Calu3 (cell line): ENCODE measurements at regions of chr2 and their contacts with region 1.

Region 1: GRCh38 chr2:191927319-191927867 is 80.5 kb upstream of the CAVIN2 start:
- DNase-seq: peak; percentile 85
- H3K4me3 Mint-ChIP-seq: peak overlapping the region; percentile 56
- H3K27ac Mint-ChIP-seq: peak overlapping the region; percentile 60
- H3K4me1 Mint-ChIP-seq: peaks cover 26% of the 10 kb centered on the region
- H3K27me3 Mint-ChIP-seq: no peaks in the 10 kb centered on the region
- CTCF ChIP-seq: no peak

Region 2: GRCh38 chr2:191835539-191836350 is 91.6 kb before region 1 on chr2:
- CTCF ChIA-PET with region 1: no interaction called
- intact Hi-C with region 1: no loop called
- DNase-seq: no peak
- H3K4me3 Mint-ChIP-seq: no peak overlapping the region
- H3K27ac Mint-ChIP-seq: no peak overlapping the region
- H3K4me1 Mint-ChIP-seq: no peaks in the 10 kb centered on the region
- H3K27me3 Mint-ChIP-seq: no peaks in the 10 kb centered on the region
- CTCF ChIP-seq: no peak

Region 3: GRCh38 chr2:191894681-191895147 is 32.7 kb before region 1 on chr2:
- CTCF ChIA-PET with region 1: no interaction called
- intact Hi-C with region 1: loop called (anchors 2 kb)
- DNase-seq: no peak
- H3K4me3 Mint-ChIP-seq: no peak overlapping the region
- H3K27ac Mint-ChIP-seq: peak overlapping the region; percentile 5
- H3K4me1 Mint-ChIP-seq: peaks cover 37% of the 10 kb centered on the region
- H3K27me3 Mint-ChIP-seq: no peaks in the 10 kb centered on the region
- CTCF ChIP-seq: no peak